ENCODE measurements at regions of chr13 and their contacts with region 1.

Region 1: DNA sequence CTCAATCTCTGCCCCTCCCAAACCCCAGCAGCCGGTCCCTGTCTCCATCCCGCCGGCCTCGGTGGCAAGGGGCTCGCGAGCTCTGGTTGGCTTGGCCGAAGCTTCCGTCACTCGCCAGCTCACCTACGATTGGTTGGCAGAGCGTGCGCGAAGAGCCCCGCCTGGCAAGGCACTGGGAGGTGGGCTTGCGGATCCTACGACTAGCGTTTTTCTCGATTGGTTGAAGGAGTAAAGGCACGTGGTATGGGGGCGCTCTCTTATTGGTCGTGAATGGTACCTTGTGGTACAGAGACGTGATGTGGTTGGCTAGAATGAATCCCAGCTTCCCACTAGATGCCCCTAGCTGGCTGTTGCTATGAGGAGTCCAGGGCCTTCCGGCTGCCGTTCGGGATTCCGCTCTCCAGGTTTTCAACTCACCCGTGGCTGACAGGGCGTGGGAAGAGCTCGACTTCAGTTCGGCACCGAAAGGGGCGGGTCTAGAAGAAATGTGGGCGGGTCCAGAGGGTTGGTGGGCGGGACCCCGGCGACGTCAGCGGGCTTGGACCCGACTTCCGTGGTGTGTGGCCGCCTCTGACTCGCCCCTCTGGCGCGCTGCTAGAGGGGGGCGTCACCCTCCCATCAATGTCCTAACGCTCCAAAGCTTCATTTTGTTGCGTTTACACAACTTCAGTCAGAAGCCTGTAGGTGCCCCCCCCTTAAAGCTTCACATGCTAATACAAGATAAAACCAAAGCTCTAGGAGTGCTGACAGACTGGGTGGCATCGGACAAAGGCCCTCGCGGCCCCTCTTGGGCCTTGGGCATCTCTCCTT is 847 bp upstream of the RAP2A start:
- DNase-seq: peak; percentile 100
- ATAC-seq: peak; percentile 78
- H3K4me3 ChIP-seq: peak overlapping the region; percentile 77
- H3K27ac ChIP-seq: peak overlapping the region; percentile 88
- H3K4me1 ChIP-seq: peaks cover 4% of the 10 kb centered on the region
- H3K27me3 ChIP-seq: no peaks in the 10 kb centered on the region
- CTCF ChIP-seq: no peak
- POLR2A ChIP-seq: no peak
- RAD21 ChIP-seq: no peak

Region 2: GRCh38 chr13:96053011-96053703 is 1380.0 kb before region 1 on chr13 and contains the start of gene UGGT2:
- CTCF ChIA-PET with region 1: no interaction called
- POLR2A ChIA-PET with region 1: interaction called, 12 read pairs
- dilution Hi-C with region 1: no loop called
- in situ Hi-C with region 1: no loop called
- intact Hi-C with region 1: no loop called
- DNase-seq: peak; percentile 94
- ATAC-seq: peak; percentile 99
- H3K4me3 ChIP-seq: peak within 1 kb of the TSS; percentile 95
- H3K27ac ChIP-seq: peak within 1 kb of the TSS; percentile 79
- H3K4me1 ChIP-seq: no peaks in the 10 kb centered on the region
- H3K27me3 ChIP-seq: no peaks in the 10 kb centered on the region; the same call in 1 of the 2 replicates
- CTCF ChIP-seq: no peak
- POLR2A ChIP-seq: peak; percentile 93
- RAD21 ChIP-seq: no peak
- total RNA-seq, gene UGGT2: 40.1 and 63.9 TPM in 2 replicates

Region 3: GRCh38 chr13:97221989-97222700 is 211.0 kb before region 1 on chr13 and contains the start of gene MBNL2:
- CTCF ChIA-PET with region 1: no interaction called
- POLR2A ChIA-PET with region 1: no interaction called
- dilution Hi-C with region 1: no loop called
- in situ Hi-C with region 1: no loop called
- intact Hi-C with region 1: loop called (anchors 2 kb)
- DNase-seq: peak; percentile 94
- ATAC-seq: peak; percentile 97
- H3K4me3 ChIP-seq: peak within 1 kb of the TSS; percentile 90
- H3K27ac ChIP-seq: peak within 1 kb of the TSS; percentile 95
- H3K4me1 ChIP-seq: peaks cover 11% of the 10 kb centered on the region
- H3K27me3 ChIP-seq: no peaks in the 10 kb centered on the region
- CTCF ChIP-seq: no peak
- POLR2A ChIP-seq: peak; percentile 88
- RAD21 ChIP-seq: no peak
- total RNA-seq, gene MBNL2: 103 and 126 TPM in 2 replicates

Region 4: DNA sequence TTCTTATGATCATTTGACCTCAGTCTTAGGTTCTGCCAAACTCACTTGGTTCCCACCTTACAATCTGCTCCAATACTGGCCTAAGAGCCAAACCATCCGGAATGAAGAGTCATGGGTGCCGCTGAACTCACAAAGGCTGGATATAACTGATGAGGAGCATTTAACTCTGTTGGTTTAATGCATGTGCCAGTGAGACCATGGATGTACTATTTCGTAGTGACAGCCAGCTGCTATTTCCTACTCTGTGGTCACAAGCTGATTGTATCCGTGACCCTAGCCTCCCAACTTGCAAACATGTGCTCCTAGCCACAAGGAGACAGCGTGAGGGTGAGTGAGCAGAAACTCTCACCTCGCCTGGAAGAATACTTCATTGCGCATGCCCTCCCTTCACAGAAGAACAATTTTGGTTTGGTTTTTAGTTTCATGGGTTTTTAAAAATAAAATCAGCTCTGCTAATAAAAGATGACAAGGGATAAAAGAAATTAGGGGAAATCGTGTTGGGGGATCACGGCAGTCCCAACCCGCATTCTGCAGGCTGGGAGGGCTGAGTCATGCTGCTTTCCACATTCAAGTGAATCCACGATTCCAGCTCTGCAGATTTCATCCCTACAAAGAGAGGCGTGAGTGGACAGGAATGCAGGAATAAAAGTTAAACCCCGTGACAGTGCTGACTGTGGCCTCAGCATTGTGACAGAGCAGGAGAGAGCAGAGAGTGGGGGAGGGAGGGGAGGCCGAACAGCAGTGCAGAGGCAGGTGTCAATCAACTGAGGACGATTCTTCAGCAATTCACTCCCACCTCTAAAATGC is 65.9 kb before region 1 on chr13:
- CTCF ChIA-PET with region 1: no interaction called
- POLR2A ChIA-PET with region 1: interaction called, 3 read pairs
- dilution Hi-C with region 1: no loop called
- in situ Hi-C with region 1: no loop called
- intact Hi-C with region 1: loop called (anchors 5 kb)
- DNase-seq: peak; percentile 78
- ATAC-seq: peak; percentile 82
- H3K4me3 ChIP-seq: no peak overlapping the region
- H3K27ac ChIP-seq: peak overlapping the region; percentile 75
- H3K4me1 ChIP-seq: peaks cover 9% of the 10 kb centered on the region
- H3K27me3 ChIP-seq: no peaks in the 10 kb centered on the region
- CTCF ChIP-seq: no peak
- POLR2A ChIP-seq: no peak
- RAD21 ChIP-seq: no peak

Region 5: DNA sequence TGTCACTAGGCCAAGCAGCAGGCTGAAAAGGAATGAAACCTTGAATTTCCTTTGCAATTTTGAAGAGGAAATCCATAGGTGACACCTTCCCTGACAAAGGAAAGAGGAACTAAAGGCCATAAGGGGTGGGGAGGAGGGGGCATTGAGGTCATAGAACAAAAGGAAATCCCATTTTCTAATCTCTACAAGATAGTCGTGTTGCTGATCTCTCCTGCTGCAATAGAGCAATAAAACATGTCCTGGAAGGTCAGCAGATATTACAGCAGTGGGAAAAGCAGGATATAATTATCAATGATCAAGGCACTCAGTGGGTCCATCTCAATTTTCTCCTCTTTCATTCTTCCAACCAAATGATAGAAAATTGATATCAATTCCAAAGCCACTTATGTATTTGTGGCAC is 19.4 kb before region 1 on chr13:
- CTCF ChIA-PET with region 1: no interaction called
- POLR2A ChIA-PET with region 1: no interaction called
- dilution Hi-C with region 1: no loop called
- in situ Hi-C with region 1: no loop called
- intact Hi-C with region 1: no loop called
- DNase-seq: no peak
- ATAC-seq: no peak
- H3K4me3 ChIP-seq: no peak overlapping the region
- H3K27ac ChIP-seq: no peak overlapping the region
- H3K4me1 ChIP-seq: no peaks in the 10 kb centered on the region
- H3K27me3 ChIP-seq: peaks cover 3% of the 10 kb centered on the region; the same call in 1 of the 2 replicates
- CTCF ChIP-seq: no peak
- POLR2A ChIP-seq: no peak
- RAD21 ChIP-seq: no peak

Region 6: GRCh38 chr13:97574926-97575325 is 141.8 kb after region 1 on chr13:
- CTCF ChIA-PET with region 1: interaction called, 3 read pairs
- POLR2A ChIA-PET with region 1: no interaction called
- dilution Hi-C with region 1: no loop called
- in situ Hi-C with region 1: no loop called
- intact Hi-C with region 1: loop called (anchors 1 kb)
- DNase-seq: peak; percentile 52
- ATAC-seq: peak; percentile 80
- H3K4me3 ChIP-seq: no peak overlapping the region
- H3K27ac ChIP-seq: no peak overlapping the region
- H3K4me1 ChIP-seq: peaks cover 2% of the 10 kb centered on the region; the same call in 1 of the 2 replicates
- H3K27me3 ChIP-seq: peaks cover 2% of the 10 kb centered on the region; the same call in 1 of the 2 replicates
- CTCF ChIP-seq: peak; percentile 55
- POLR2A ChIP-seq: no peak
- RAD21 ChIP-seq: peak; percentile 64

Region 7: GRCh38 chr13:97798836-97799235 is 365.7 kb after region 1 on chr13:
- CTCF ChIA-PET with region 1: no interaction called
- POLR2A ChIA-PET with region 1: no interaction called
- dilution Hi-C with region 1: no loop called
- in situ Hi-C with region 1: no loop called
- intact Hi-C with region 1: loop called (anchors 1 kb)
- DNase-seq: peak; percentile 15
- ATAC-seq: peak; percentile 59
- H3K4me3 ChIP-seq: no peak overlapping the region
- H3K27ac ChIP-seq: no peak overlapping the region
- H3K4me1 ChIP-seq: peaks cover 2% of the 10 kb centered on the region; the same call in 1 of the 2 replicates
- H3K27me3 ChIP-seq: peaks cover 9% of the 10 kb centered on the region
- CTCF ChIP-seq: no peak
- POLR2A ChIP-seq: no peak
- RAD21 ChIP-seq: no peak

Region 8: DNA sequence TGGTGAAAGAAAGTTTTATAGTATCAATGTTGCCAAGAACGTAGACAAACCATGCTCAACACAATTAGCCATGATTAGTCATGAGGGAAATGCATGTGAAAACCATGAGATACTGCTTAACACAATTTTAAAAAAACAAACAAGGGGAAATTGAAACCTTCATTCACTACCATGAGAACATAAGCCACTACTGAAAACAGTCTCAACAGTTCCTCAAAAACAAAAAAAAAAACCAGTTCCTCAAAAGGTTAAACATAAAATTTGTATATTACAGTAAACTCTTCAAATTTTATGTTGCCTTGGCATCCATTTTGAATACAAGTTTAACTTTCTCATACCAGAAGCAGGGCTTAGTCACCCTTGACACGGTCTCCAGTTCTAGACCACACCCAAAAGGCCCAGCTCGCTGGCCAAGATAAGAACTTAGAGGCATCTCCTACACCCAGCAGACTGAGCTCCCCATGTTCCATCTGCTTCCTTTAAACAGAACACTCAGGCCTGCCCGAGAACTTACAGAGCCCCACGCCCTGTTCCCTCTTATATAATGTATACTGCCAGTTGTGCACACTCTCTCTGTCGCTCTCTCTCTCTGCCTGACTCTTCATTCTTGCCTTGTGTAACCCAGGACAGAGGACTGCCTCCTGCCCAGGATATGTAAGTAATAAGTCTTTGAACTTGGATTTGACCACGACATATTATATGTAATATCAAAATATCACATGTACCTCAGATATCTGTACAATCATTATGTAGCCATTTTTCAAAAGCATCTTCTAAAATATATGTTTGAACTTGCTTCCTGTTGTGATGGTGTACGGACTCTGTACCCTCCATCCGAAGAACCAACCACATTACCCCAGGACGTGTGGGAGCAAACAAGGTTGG is 1076.4 kb after region 1 on chr13:
- CTCF ChIA-PET with region 1: no interaction called
- POLR2A ChIA-PET with region 1: no interaction called
- dilution Hi-C with region 1: no loop called
- in situ Hi-C with region 1: no loop called
- intact Hi-C with region 1: no loop called
- DNase-seq: peak; percentile 92
- ATAC-seq: peak; percentile 84
- H3K4me3 ChIP-seq: no peak overlapping the region
- H3K27ac ChIP-seq: peak overlapping the region; percentile 82
- H3K4me1 ChIP-seq: peaks cover 27% of the 10 kb centered on the region
- H3K27me3 ChIP-seq: no peaks in the 10 kb centered on the region
- CTCF ChIP-seq: no peak
- POLR2A ChIP-seq: peak; percentile 54; the same call in 1 of the 2 replicates
- RAD21 ChIP-seq: no peak